Dorsolateral prefrontal cortex (tissue), 120 donors: ENCODE measurements at regions of chrX and their contacts with region 1.

Region 1: DNA sequence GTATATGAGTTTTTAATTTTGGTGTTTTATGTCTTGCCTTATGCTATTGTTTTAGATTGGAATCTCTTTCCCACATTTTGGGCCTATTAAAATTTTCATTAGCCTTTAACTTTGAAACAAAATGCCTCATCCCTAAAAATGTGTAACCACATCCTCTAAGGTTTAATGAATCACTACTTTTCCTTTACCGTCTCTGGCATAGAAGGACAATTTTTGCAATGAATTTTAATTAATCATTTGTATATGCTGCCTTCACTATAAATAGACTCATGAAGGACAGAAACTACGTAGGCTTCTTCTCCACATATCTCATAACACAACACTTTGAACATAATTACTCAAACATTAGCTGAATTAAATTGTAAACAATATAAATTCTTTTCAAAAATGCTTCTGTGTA is 421.5 kb downstream of the NLGN4X start:
- DNase-seq: no peak
- H3K4me3 ChIP-seq: no peak overlapping the region
- H3K27ac ChIP-seq: no peak overlapping the region
- H3K27me3 ChIP-seq: peaks cover 0 to 18% (median 0%) of the 10 kb centered on the region in 45 donors
- CTCF ChIP-seq: no peak

Region 2: GRCh38 chrX:5869786-5870185 is 62.6 kb after region 1 on chrX:
- intact Hi-C with region 1: loop called in 1 of 2 experiments (anchors 10 kb)
- DNase-seq: no peak
- H3K4me3 ChIP-seq: no peak overlapping the region
- H3K27ac ChIP-seq: no peak overlapping the region
- H3K27me3 ChIP-seq: peaks cover 0 to 31% (median 4%) of the 10 kb centered on the region in 45 donors
- CTCF ChIP-seq: no peak